ENCODE measurements at regions of chr20 and their contacts with region 1.

Region 1: GRCh38 chr20:44683263-44684046 is 31.7 kb upstream of the CCN5 start:
- DNase-seq: peak; percentile 85
- ATAC-seq: peak; percentile 81
- H3K4me3 Mint-ChIP-seq: no peak overlapping the region
- H3K27ac Mint-ChIP-seq: no peak overlapping the region
- H3K4me1 Mint-ChIP-seq: peaks cover 23% of the 10 kb centered on the region
- H3K27me3 Mint-ChIP-seq: peaks cover 10% of the 10 kb centered on the region
- CTCF ChIP-seq: peak; percentile 60

Region 2: GRCh38 chr20:44609511-44610312 is 73.7 kb before region 1 on chr20:
- CTCF ChIA-PET with region 1: interaction called, 11 read pairs
- POLR2A ChIA-PET with region 1: no interaction called
- DNase-seq: peak; percentile 95
- ATAC-seq: peak; percentile 97
- H3K4me3 Mint-ChIP-seq: peak overlapping the region; percentile 37; the same call in 1 of the 2 replicates
- H3K27ac Mint-ChIP-seq: peak overlapping the region; percentile 81
- H3K4me1 Mint-ChIP-seq: peaks cover 11% of the 10 kb centered on the region
- H3K27me3 Mint-ChIP-seq: peaks cover 10% of the 10 kb centered on the region
- CTCF ChIP-seq: peak; percentile 88

Region 3: GRCh38 chr20:44642203-44643153 is 41.0 kb before region 1 on chr20:
- CTCF ChIA-PET with region 1: interaction called, 24 read pairs
- POLR2A ChIA-PET with region 1: interaction called, 4 read pairs
- DNase-seq: peak; percentile 45
- ATAC-seq: peak; percentile 67
- H3K4me3 Mint-ChIP-seq: peak overlapping the region; percentile 0; the same call in 1 of the 2 replicates
- H3K27ac Mint-ChIP-seq: peak overlapping the region; percentile 70
- H3K4me1 Mint-ChIP-seq: peaks cover 57% of the 10 kb centered on the region
- H3K27me3 Mint-ChIP-seq: no peaks in the 10 kb centered on the region
- CTCF ChIP-seq: no peak

Region 4: GRCh38 chr20:44695295-44696230 is 12.1 kb after region 1 on chr20:
- CTCF ChIA-PET with region 1: interaction called, 10 read pairs
- POLR2A ChIA-PET with region 1: no interaction called
- DNase-seq: no peak
- ATAC-seq: no peak
- H3K4me3 Mint-ChIP-seq: no peak overlapping the region
- H3K27ac Mint-ChIP-seq: no peak overlapping the region
- H3K4me1 Mint-ChIP-seq: peaks cover 8% of the 10 kb centered on the region
- H3K27me3 Mint-ChIP-seq: peaks cover 5% of the 10 kb centered on the region
- CTCF ChIP-seq: no peak

Region 5: GRCh38 chr20:44723391-44723790 is 39.9 kb after region 1 on chr20:
- CTCF ChIA-PET with region 1: interaction called, 26 read pairs
- POLR2A ChIA-PET with region 1: interaction called, 3 read pairs
- DNase-seq: no peak
- ATAC-seq: no peak
- H3K4me3 Mint-ChIP-seq: no peak overlapping the region
- H3K27ac Mint-ChIP-seq: peak overlapping the region; percentile 69
- H3K4me1 Mint-ChIP-seq: peaks cover 16% of the 10 kb centered on the region
- H3K27me3 Mint-ChIP-seq: no peaks in the 10 kb centered on the region
- CTCF ChIP-seq: no peak

Measured in WTC11 (cell line).